GM12878 (cell line): ENCODE measurements at regions of chr1 and their contacts with region 1.

Region 1: GRCh38 chr1:226827968-226828513 is 42.4 kb upstream of the PSEN2 start:
- DNase-seq: peak; percentile 62
- ATAC-seq: peak; percentile 95
- H3K4me3 ChIP-seq: no peak overlapping the region; the same call in 1 of the 2 replicates
- H3K27ac ChIP-seq: peak overlapping the region; percentile 85
- H3K4me1 ChIP-seq: peaks cover 31% of the 10 kb centered on the region
- H3K27me3 ChIP-seq: no peaks in the 10 kb centered on the region
- CTCF ChIP-seq: peak; percentile 93 to 98 (median 96)
- EP300 ChIP-seq: 0 out of 4 replicates have a peak, but pooled peaks of 1 of the 2 experiments have one; percentile 42
- POLR2A ChIP-seq: peak; percentile 27; the same call in 1 of the 2 replicates
- RAD21 ChIP-seq: peak; percentile 99

Region 2: DNA sequence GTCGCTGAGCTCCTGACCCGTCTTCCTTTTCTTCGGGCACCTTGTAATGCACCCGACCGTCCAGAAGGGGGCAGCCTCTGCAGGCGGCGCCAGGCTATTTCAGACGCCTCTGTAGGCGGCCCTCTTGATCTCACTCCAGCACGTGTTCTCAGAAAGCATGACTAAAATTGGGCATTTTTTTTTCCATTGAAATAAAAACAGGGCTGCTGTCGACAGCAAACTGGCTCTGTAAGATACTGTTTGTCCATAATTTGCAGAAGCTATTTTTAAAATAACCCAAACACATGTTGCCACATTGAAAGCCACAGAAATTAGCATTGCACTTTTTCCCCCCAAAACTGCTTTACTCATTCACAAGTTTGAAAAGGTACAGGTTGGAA is 201.5 kb before region 1 on chr1:
- CTCF ChIA-PET with region 1: interaction called, 112 read pairs
- POLR2A ChIA-PET with region 1: no interaction called
- RAD21 ChIA-PET with region 1: interaction called, 22 read pairs
- SMC1A ChIA-PET with region 1: interaction called, 13 read pairs
- in situ Hi-C with region 1: loop called (anchors 5 kb)
- intact Hi-C with region 1: loop called (anchors 2 kb)
- DNase-seq: peak; percentile 27
- ATAC-seq: peak; percentile 93
- H3K4me3 ChIP-seq: no peak overlapping the region
- H3K27ac ChIP-seq: no peak overlapping the region
- H3K4me1 ChIP-seq: peaks cover 6% of the 10 kb centered on the region
- H3K27me3 ChIP-seq: no peaks in the 10 kb centered on the region
- CTCF ChIP-seq: peak; percentile 79 to 97 (median 97)
- EP300 ChIP-seq: no peak
- POLR2A ChIP-seq: no peak
- RAD21 ChIP-seq: peak; percentile 82

Region 3: DNA sequence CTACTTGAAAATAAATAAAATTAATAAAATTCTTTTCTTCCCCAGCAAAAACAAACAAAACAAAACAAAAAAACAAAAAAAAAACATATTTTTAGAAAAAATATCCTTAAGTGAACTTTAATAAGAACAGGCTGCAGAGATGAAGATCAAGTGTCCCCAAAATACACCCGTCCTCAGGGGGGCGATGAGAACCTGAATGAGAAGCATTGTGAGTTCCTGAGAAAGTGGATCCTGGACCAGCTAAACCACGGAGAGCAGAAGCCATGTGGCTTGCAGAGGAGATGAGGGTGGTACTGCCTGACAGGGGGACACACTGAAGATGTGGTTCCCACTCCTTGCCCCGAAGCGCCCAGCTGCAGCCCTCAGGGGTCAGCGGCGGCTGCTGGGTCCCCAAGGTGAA is 178.3 kb before region 1 on chr1:
- CTCF ChIA-PET with region 1: interaction called, 8 read pairs
- POLR2A ChIA-PET with region 1: interaction called, 3 read pairs
- RAD21 ChIA-PET with region 1: interaction called, 4 read pairs
- SMC1A ChIA-PET with region 1: interaction called, 10 read pairs
- in situ Hi-C with region 1: no loop called
- intact Hi-C with region 1: no loop called
- DNase-seq: no peak
- ATAC-seq: no peak
- H3K4me3 ChIP-seq: no peak overlapping the region
- H3K27ac ChIP-seq: no peak overlapping the region
- H3K4me1 ChIP-seq: peaks cover 22% of the 10 kb centered on the region
- H3K27me3 ChIP-seq: no peaks in the 10 kb centered on the region
- CTCF ChIP-seq: peak; percentile 16 to 38 (median 36); a peak in 3 of 6 replicates
- EP300 ChIP-seq: no peak
- POLR2A ChIP-seq: no peak
- RAD21 ChIP-seq: peak; percentile 56

Region 4: GRCh38 chr1:226697151-226697939 is 130.7 kb before region 1 on chr1:
- CTCF ChIA-PET with region 1: no interaction called
- POLR2A ChIA-PET with region 1: interaction called, 3 read pairs
- RAD21 ChIA-PET with region 1: interaction called, 20 read pairs
- SMC1A ChIA-PET with region 1: interaction called, 9 read pairs
- in situ Hi-C with region 1: no loop called
- intact Hi-C with region 1: loop called (anchors 5 kb)
- DNase-seq: peak; percentile 67
- ATAC-seq: peak; percentile 85
- H3K4me3 ChIP-seq: no peak overlapping the region
- H3K27ac ChIP-seq: peak overlapping the region; percentile 60
- H3K4me1 ChIP-seq: peaks cover 29% of the 10 kb centered on the region
- H3K27me3 ChIP-seq: no peaks in the 10 kb centered on the region
- CTCF ChIP-seq: no peak
- EP300 ChIP-seq: peak in 1 of 2 experiments; percentile 54; a peak in 1 of 4 replicates
- POLR2A ChIP-seq: no peak
- RAD21 ChIP-seq: no peak

Region 5: GRCh38 chr1:226731257-226731893 is 96.7 kb before region 1 on chr1:
- CTCF ChIA-PET with region 1: interaction called, 10 read pairs
- POLR2A ChIA-PET with region 1: interaction called, 10 read pairs
- RAD21 ChIA-PET with region 1: interaction called, 17 read pairs
- SMC1A ChIA-PET with region 1: no interaction called
- in situ Hi-C with region 1: loop called (anchors 10 kb)
- intact Hi-C with region 1: loop called (anchors 2 kb)
- DNase-seq: no peak
- ATAC-seq: peak; percentile 13
- H3K4me3 ChIP-seq: peak overlapping the region; percentile 65
- H3K27ac ChIP-seq: peak overlapping the region; percentile 45
- H3K4me1 ChIP-seq: peaks cover 36% of the 10 kb centered on the region
- H3K27me3 ChIP-seq: no peaks in the 10 kb centered on the region
- CTCF ChIP-seq: no peak
- EP300 ChIP-seq: no peak
- POLR2A ChIP-seq: no peak
- RAD21 ChIP-seq: no peak

Region 6: GRCh38 chr1:226772446-226773139 is 55.4 kb before region 1 on chr1:
- CTCF ChIA-PET with region 1: interaction called, 6 read pairs
- POLR2A ChIA-PET with region 1: interaction called, 5 read pairs
- RAD21 ChIA-PET with region 1: interaction called, 4 read pairs
- SMC1A ChIA-PET with region 1: interaction called, 4 read pairs
- in situ Hi-C with region 1: no loop called
- intact Hi-C with region 1: loop called (anchors 5 kb)
- DNase-seq: peak; percentile 51
- ATAC-seq: peak; percentile 91
- H3K4me3 ChIP-seq: peak overlapping the region; percentile 11; the same call in 1 of the 2 replicates
- H3K27ac ChIP-seq: no peak overlapping the region
- H3K4me1 ChIP-seq: peaks cover 11% of the 10 kb centered on the region
- H3K27me3 ChIP-seq: no peaks in the 10 kb centered on the region
- CTCF ChIP-seq: no peak
- EP300 ChIP-seq: 0 out of 4 replicates have a peak, but pooled peaks of 1 of the 2 experiments have one; percentile 13
- POLR2A ChIP-seq: no peak
- RAD21 ChIP-seq: no peak

Region 7: DNA sequence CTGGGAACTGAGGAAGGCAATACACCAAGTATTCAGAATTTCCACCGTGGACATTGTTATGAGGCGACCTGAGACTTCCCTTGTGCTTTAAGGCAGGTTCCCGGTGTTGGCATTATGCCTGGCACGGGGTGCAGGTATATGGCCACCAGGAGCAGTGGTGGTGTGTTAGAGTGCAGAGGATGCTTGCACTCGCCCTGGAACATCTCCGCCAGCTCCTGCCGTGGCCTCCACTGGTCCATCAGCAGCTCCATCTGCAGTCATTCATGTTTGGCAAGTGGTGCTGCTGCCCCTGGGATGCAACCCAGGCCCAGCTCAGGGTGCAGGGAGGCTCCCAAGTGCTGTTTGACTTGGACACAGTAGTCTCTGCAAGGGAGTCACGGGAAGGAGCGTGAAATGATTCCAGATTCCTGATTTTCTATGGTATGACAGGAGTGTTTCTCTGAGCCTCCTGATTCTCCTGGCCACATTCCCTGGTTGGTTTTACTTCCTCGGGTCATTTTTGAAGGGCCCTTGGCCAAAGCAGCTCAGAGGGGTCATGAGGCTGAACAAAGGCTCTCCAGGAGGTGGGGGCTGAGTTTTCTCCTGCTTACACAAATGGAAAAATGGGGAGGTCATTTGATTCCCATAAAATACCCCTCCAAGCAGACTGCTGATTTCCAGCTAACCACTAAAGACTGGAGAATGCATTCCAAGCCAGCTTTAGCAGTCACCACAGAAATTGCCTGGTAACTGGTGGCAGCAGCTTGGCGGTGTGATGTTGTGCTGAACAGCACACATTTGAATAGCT is 18.1 kb before region 1 on chr1:
- CTCF ChIA-PET with region 1: interaction called, 4 read pairs
- POLR2A ChIA-PET with region 1: no interaction called
- RAD21 ChIA-PET with region 1: interaction called, 12 read pairs
- SMC1A ChIA-PET with region 1: interaction called, 8 read pairs
- in situ Hi-C with region 1: no loop called
- intact Hi-C with region 1: no loop called
- DNase-seq: no peak
- ATAC-seq: no peak
- H3K4me3 ChIP-seq: no peak overlapping the region
- H3K27ac ChIP-seq: no peak overlapping the region
- H3K4me1 ChIP-seq: no peaks in the 10 kb centered on the region
- H3K27me3 ChIP-seq: no peaks in the 10 kb centered on the region; a peak in 1 of 4 replicates
- CTCF ChIP-seq: no peak
- EP300 ChIP-seq: no peak
- POLR2A ChIP-seq: no peak
- RAD21 ChIP-seq: no peak